K562 (cell line): ENCODE measurements at regions of chr15 and their contacts with region 1.

Region 1: GRCh38 chr15:76572983-76573314 is 236.4 kb downstream of the ISL2 start:
- DNase-seq: no peak
- ATAC-seq: no peak
- H3K4me3 ChIP-seq: no peak overlapping the region
- H3K27ac ChIP-seq: no peak overlapping the region
- H3K4me1 ChIP-seq: no peaks in the 10 kb centered on the region
- H3K27me3 ChIP-seq: no peaks in the 10 kb centered on the region
- CTCF ChIP-seq: no peak
- EP300 ChIP-seq: no peak
- POLR2A ChIP-seq: no peak
- RAD21 ChIP-seq: no peak

Region 2: DNA sequence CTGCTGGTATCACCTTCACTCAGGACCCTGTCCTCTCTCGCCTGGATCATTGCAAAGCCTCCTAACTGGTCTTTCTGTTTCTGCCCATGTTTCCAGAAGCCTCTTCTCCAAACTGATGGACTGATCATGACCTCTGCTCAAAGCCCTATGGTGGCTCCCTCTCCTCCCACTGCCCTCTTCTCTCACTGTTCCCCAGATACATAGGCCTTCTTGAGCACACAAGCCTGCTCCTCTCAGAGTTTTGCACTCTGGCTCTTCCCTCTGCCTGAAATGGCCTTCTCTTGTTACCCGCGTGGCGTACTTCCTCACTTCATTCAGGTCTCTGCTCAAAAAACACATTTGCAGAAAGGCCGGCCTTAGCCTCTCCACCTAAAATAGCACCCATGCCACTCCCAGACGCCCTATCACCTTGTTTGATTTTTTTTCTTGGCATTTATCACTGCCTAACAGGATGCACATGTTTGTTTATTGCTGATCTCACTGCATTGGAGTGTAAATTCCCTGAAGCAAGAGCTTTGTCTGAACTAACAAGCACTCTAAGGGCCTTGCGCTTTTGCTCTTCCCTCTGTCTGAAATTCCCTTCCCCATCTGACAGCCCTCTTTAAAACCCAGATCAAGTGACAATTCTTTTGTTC is 260.3 kb before region 1 on chr15:
- CTCF ChIA-PET with region 1: no interaction called
- POLR2A ChIA-PET with region 1: no interaction called
- in situ Hi-C with region 1: no loop called
- intact Hi-C with region 1: no loop called
- DNase-seq: peak in 1 of 4 experiments; percentile 47
- ATAC-seq: no peak
- H3K4me3 ChIP-seq: no peak overlapping the region
- H3K27ac ChIP-seq: peak overlapping the region; percentile 68
- H3K4me1 ChIP-seq: peaks cover 28 to 29% of the 10 kb centered on the region in 2 experiments
- H3K27me3 ChIP-seq: no peaks in the 10 kb centered on the region
- CTCF ChIP-seq: no peak
- EP300 ChIP-seq: no peak
- POLR2A ChIP-seq: no peak
- RAD21 ChIP-seq: no peak

Region 3: DNA sequence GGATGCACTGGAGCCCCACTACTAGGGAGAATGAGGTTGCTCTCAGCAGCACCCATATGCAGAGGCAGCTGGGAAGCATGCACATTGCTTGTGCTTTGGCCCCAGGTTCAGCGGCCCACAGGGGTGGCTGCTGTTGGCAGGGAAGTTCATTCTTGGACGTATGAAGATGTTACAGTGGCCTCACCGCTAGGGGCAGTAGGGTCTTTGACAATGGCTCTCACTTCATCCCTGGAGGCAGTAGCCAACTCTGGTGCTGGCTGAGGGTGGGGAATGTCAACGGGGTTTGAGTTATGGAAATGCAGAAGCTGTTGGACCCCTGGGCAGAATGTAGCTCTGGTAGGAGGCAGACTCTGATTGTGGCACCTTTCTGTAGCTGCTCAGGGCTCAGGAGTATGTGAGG is 52.3 kb after region 1 on chr15:
- CTCF ChIA-PET with region 1: no interaction called
- POLR2A ChIA-PET with region 1: no interaction called
- in situ Hi-C with region 1: loop called (anchors 5 kb)
- intact Hi-C with region 1: no loop called
- DNase-seq: peak in 3 of 4 experiments; percentile 11 to 23 (median 19)
- ATAC-seq: peak; percentile 78
- H3K4me3 ChIP-seq: no peak overlapping the region
- H3K27ac ChIP-seq: no peak overlapping the region
- H3K4me1 ChIP-seq: no peaks in the 10 kb centered on the region
- H3K27me3 ChIP-seq: no peaks in the 10 kb centered on the region
- CTCF ChIP-seq: peak; percentile 43 to 55 (median 51); a peak in 5 of 6 replicates
- EP300 ChIP-seq: no peak
- POLR2A ChIP-seq: no peak
- RAD21 ChIP-seq: no peak

Region 4: DNA sequence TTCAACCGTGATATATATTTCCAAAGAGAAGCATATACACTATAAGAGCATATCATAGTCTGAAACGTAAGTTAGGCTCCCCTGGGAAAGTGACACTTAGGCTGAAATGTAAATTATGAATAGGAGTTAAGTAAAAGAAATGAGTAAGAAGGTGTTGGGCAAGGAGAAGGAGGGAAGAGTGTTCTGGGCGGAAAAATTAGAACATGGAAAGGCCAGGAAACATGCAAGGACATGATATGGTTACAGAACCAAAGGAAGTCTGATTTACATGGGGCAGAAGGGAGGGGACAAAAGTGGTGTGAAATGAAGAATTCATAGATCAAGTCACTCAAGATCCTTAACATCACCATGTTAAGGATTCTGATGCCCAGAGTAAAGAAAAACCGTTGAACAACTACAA is 257.0 kb after region 1 on chr15:
- CTCF ChIA-PET with region 1: no interaction called
- POLR2A ChIA-PET with region 1: no interaction called
- in situ Hi-C with region 1: no loop called
- intact Hi-C with region 1: no loop called
- DNase-seq: no peak
- ATAC-seq: no peak
- H3K4me3 ChIP-seq: no peak overlapping the region
- H3K27ac ChIP-seq: no peak overlapping the region
- H3K4me1 ChIP-seq: no peaks in the 10 kb centered on the region
- H3K27me3 ChIP-seq: 0 out of 5 replicates have a peak, but pooled peaks cover 2 to 5% of the 10 kb centered on the region in 2 experiments
- CTCF ChIP-seq: no peak
- EP300 ChIP-seq: no peak
- POLR2A ChIP-seq: no peak
- RAD21 ChIP-seq: no peak